Tibial artery (tissue), 4 donors: ENCODE measurements at regions of chr2 and their contacts with region 1.

Region 1: DNA sequence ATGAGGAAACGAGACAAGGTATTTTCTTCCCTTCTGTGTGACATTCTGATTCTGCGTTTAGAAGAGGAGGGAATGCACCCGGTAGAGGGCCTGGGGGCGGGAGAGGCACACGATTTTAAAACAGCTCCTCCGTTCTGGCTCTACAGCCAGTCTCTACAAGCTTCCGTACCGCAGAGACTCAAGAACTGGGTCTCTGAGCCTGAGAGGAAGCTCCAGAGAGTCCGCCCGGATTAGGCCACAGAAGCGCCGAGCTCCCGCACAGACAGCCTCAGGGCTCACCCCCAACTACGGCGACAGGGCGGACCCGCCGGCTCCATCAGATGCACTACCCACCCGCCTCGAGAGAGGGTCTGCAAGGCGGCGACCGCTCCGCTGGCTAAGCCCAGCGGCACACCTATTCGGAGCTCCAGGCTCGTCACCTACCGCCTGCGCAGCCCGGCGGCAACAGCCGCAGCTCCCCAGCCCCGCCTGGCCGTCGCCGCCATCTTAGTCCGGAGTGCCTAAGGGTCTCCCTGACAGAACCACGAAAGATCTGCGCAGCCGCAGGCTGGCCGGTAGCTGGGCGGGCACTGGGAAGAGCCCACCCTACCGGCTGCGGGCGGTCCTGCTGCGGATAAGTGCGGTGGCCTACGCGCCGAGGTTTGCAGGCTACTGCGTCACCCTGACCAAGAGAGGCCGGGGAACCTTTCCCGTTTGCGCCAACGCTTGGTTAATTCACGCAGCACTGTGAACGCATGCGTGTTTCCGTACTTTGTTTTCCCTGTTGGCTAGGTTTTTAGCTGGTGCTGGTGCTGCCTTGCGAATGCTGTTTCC is at the start of gene NFU1:
- DNase-seq: peak; percentile 93 to 96
- H3K4me3 ChIP-seq: peak within 1 kb of the TSS; percentile 74 to 95
- H3K27ac ChIP-seq: peak within 1 kb of the TSS; percentile 95 to 99
- H3K4me1 ChIP-seq: peaks cover 0 to 39% (median 12%) of the 10 kb centered on the region in 4 donors
- H3K27me3 ChIP-seq: no peaks in the 10 kb centered on the region
- CTCF ChIP-seq: peak; percentile 70 to 86

Region 2: DNA sequence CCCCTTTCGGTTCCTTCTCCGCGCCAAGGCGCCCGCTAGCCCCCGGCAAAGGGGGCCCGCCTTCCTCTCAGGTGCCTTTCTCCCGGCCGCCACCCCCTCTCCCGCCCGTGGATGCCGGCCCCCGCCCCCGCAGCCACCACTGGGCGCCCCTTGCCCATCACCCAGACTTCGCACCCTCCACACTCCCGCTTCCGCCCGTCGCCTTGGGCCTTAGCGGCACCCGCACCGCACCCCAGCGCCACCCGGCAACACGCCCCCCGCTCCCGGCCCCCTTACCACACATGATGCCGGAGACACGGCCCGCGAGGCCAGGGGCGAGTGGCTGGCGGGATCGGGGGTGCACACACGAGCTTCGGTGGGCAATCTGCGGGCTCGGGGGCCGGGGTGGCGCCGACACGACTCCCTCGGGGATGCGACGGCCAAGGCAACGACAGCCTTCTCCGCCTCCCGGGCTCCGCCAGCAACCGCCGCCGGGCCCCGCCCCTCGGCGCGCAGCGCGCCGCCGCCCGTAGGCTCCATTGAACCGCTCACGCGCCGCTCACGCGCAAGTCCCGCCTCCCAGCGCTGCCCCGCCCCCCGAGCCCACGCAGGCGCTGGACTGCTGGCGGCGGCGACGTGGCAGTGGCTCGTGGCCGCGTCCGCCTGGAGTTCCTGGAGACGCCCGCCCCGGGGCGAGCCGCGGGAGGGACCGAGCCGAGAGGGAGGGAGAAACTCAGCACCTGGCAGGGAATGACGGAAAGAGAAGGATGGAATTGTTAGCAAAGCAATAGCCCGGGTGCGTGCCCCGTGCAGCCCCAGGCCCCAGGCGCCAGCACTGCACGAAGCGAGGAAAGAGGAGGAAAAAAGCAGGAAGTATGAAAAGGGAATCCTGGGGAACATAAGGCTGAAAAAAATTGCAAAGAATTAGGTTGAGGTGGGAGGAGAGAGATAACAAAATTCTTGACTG is 50.1 kb before region 1 on chr2 and contains the start of gene GFPT1:
- intact Hi-C with region 1: loop called (anchors 10 kb)
- DNase-seq: peak; percentile 93 to 98
- H3K4me3 ChIP-seq: peak within 1 kb of the TSS; percentile 76 to 99
- H3K27ac ChIP-seq: peak within 1 kb of the TSS; percentile 87 to 95
- H3K4me1 ChIP-seq: peaks cover 0 to 47% (median 12%) of the 10 kb centered on the region in 4 donors
- H3K27me3 ChIP-seq: no peaks in the 10 kb centered on the region
- CTCF ChIP-seq: no peak

Region 3: DNA sequence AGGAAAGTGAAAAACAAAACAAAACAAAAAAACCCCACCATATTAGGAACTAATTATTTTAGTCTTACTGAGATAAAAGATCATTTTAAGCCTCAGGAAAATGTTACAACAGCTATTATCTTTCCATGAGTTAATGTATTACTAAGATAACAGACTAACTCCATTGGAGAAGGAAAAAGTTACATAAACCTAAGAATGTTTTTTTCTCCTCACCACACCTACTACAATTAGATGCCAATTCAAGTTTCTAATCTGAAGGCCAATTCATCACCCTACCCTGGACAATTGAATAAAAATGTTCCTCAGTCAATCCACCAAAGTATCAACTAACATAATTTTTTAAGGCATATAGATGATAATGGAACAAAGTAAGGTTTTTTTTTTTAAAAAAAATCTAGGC is 39.9 kb before region 1 on chr2:
- intact Hi-C with region 1: no loop called
- DNase-seq: no peak
- H3K4me3 ChIP-seq: no peak overlapping the region
- H3K27ac ChIP-seq: no peak overlapping the region
- H3K4me1 ChIP-seq: peaks cover 0 to 10% (median 0%) of the 10 kb centered on the region in 4 donors
- H3K27me3 ChIP-seq: no peaks in the 10 kb centered on the region
- CTCF ChIP-seq: no peak

Region 4: GRCh38 chr2:69694894-69695849 is 258.0 kb after region 1 on chr2:
- intact Hi-C with region 1: no loop called
- DNase-seq: no peak
- H3K4me3 ChIP-seq: no peak overlapping the region
- H3K27ac ChIP-seq: no peak overlapping the region
- H3K4me1 ChIP-seq: peaks cover 0 to 15% (median 12%) of the 10 kb centered on the region in 4 donors
- H3K27me3 ChIP-seq: no peaks in the 10 kb centered on the region
- CTCF ChIP-seq: no peak